ENCODE measurements at regions of chr7 and their contacts with region 1.

Region 1: DNA sequence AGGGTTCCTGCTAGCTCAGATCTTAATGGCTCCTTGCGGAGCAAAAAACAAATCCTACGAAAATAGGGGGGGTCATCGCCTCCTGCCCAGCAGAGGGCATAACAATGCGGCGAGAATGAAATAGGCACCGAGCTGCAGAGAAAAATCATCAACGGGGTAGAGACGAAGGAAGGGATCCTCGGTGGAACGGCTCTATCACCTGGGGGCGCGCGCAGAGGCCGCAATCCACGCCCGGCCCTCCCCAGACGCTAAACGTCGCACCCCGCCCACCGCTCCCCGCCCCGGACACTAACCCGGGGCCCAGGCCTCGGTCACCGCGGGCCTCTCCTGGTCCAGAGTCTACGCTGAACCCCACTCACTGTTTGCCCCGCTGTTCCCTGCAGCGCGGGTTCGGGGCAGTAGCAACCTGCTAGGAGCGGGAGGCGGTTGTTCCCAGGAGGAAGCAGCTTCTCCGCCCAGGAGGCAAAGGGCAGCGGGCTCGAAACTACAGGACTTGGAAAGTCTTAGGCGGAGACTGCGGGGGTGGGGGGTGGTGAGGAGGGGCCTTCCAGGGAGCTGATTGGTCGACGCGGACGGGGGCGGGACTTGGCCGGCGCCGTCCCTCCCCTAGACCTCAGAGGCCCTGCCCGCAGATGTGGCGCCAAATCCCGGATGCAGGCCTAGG is at the start of gene TCAF1:
- DNase-seq: peak; percentile 98
- ATAC-seq: peak; percentile 98
- total RNA-seq, gene TCAF1: 33.8 TPM

Region 2: GRCh38 chr7:143979205-143979758 is 77.5 kb after region 1 on chr7:
- intact Hi-C with region 1: no loop called
- DNase-seq: no peak
- ATAC-seq: no peak

Region 3: DNA sequence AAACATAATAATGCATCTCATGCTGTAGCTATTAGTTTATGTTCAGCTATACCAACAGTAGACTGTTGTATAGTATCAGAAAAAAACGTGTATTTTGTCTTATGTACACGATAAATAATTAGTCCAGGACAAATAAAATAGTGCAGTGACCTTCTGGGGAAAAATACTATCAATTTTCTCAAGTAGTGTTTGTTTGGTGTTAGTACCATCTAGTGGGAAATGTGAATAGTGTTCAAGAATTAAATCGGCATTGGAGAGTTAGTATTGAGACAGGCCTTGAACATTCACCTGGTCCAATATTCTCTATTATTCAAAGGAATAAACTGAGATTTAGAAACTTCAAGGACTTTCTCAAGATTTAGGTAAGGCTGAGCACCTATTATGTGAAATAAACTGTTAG is 125.3 kb after region 1 on chr7:
- intact Hi-C with region 1: loop called (anchors 10 kb)
- DNase-seq: no peak
- ATAC-seq: peak; percentile 58

Region 4: GRCh38 chr7:144174613-144175012 is 272.8 kb after region 1 on chr7:
- intact Hi-C with region 1: no loop called
- DNase-seq: no peak
- ATAC-seq: no peak

Measured in Right ventricle myocardium superior (tissue), 1 donor.